CD14-positive monocyte (primary cell): ENCODE measurements at regions of chr14 and their contacts with region 1.

Region 1: DNA sequence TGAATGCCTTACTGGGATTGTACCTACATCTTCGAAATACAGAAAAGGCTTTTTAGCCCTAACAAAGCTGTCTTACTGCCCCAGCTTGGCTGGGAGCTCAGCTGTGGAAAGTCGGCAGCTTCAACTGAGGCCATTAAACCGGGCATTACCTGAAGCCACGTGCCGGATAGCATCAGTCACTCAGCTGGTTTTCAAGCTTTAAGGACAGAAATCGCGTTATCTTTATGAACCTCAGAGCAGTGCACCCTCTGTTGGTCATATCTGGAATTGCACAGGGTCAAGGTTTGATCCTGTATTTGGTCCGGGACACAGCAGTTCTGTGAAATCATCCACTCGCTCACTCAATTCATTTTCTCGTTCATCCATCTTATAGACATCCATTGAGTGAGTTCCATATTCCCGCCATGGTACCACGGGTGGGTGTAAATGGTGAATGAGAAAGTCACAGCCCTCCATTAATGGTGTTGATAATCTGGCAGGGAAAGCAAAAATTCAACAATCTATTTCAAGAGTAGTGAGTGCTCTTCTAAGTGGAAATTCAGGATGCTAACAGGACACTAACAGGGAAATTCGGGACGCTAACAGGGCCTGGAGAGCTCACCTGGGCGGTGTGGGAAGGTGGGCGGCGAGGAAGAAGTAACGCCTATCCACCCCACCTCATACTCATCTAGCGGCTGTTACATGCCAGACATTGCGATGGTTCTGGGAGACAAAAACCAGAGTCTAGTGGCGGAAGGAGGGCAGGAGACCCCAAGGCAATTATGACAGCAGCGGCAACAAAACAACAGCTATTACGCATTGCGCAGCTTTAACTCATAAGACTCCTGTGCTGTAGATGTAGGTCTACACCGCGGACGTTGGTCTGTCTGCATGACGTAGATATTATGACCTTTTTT is 60.6 kb upstream of the TCL1A start:
- DNase-seq: peak in 2 of 3 donors; percentile 13 to 17
- H3K4me3 ChIP-seq: no peak overlapping the region
- H3K4me3 Mint-ChIP-seq: no peak overlapping the region
- H3K27ac ChIP-seq: no peak overlapping the region
- H3K27ac Mint-ChIP-seq: no peak overlapping the region
- H3K4me1 ChIP-seq: no peaks in the 10 kb centered on the region
- H3K4me1 Mint-ChIP-seq: no peaks in the 10 kb centered on the region
- H3K27me3 ChIP-seq: no peaks in the 10 kb centered on the region
- H3K27me3 Mint-ChIP-seq: peaks cover 0 to 8% (median 2%) of the 10 kb centered on the region in 3 donors
- CTCF ChIP-seq: peak; percentile 93

Region 2: GRCh38 chr14:95431199-95432143 is 343.0 kb before region 1 on chr14:
- intact Hi-C with region 1: loop called (anchors 10 kb)
- DNase-seq: no peak
- H3K4me3 ChIP-seq: no peak overlapping the region
- H3K4me3 Mint-ChIP-seq: no peak overlapping the region
- H3K27ac ChIP-seq: peak overlapping the region in 1 of 2 donors; percentile 36
- H3K27ac Mint-ChIP-seq: peak overlapping the region in 2 of 7 donors; percentile 37 to 70
- H3K4me1 ChIP-seq: no peaks in the 10 kb centered on the region
- H3K4me1 Mint-ChIP-seq: no peaks in the 10 kb centered on the region
- H3K27me3 ChIP-seq: no peaks in the 10 kb centered on the region
- H3K27me3 Mint-ChIP-seq: no peaks in the 10 kb centered on the region
- CTCF ChIP-seq: peak; percentile 43